ENCODE measurements at regions of chr1 and their contacts with region 1.

Region 1: DNA sequence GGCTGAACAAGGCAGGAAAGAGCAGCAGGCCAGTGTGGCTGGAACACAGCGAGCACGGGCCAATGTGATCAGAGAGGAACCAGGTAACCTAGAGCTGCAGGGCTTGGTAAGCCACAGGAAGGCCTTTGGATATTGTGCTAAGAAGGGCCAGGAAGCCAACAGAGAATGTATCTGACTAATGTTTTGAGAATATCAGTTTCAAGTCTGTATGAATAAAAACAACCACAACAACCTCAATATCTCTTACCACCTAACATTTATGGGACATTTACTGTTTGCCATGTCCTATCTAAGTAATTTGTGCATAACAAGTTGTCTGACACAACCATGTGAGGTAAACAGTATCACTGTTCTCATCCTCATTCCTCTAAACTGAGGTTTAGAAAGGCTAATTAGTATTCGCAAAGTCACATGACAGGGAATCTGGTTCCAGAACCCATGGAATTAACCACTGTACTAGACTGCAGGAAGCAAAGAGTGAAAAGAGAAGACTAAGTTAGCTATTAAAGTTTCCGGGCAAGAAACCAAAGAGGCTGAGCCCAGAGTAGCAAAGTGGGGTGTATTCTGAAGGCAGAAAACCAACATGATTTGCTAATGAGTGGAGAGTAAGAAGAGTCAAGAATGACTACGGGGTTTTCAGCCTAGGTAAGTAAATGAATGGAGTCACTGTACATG is 38.9 kb downstream of the SPRTN start:
- DNase-seq: no peak
- H3K4me3 Mint-ChIP-seq: peak overlapping the region; percentile 28
- H3K27ac Mint-ChIP-seq: peak overlapping the region; percentile 83
- H3K4me1 Mint-ChIP-seq: peaks cover 34% of the 10 kb centered on the region
- H3K27me3 Mint-ChIP-seq: no peaks in the 10 kb centered on the region

Region 2: DNA sequence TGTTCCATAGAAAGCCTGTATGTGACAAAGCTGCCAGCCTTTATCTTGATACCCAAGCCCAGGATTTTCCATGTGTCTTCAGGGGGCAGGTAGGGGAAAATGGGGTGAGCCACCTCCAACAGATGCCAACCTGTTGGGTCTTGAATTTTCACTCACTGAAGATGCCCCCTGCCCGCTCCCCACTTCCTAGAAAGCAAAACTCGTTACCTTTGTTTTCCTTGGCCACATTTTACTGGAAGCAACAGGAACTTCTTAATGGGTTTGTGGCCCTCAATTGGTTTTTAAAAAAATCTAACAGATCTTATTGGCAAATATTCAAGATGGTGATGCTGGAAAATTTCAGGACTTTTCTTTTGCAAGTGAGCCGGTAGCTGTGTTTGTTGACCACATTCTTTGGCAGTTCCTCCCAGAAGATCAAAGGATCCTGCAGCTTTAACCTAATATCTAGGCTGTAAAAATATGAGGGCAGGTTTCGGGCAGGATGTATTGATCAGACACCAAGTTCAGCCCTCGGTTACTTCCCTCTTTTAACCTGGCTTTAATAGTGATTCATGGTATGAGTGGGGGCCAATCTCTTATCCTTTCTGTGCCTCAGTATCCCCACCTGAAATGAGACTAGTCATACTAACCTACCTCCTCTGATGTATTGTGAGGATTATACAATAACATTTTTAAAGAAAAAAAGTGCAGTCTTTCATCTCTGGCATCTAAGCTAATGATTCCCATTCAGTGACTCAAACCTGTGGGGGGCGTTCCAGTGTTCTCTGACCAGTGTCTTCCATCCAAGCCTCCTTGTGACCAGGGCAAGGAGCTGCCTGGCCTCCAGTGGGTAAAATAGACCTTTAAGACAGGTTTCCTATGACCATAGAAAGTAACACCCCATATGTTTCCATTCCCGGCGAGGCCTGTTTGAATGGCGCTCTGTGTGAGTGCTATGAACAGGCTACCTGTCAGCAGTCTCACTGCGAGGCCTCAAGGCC is 157.3 kb before region 1 on chr1:
- intact Hi-C with region 1: no loop called
- DNase-seq: no peak
- H3K4me3 Mint-ChIP-seq: no peak overlapping the region
- H3K27ac Mint-ChIP-seq: no peak overlapping the region
- H3K4me1 Mint-ChIP-seq: peaks cover 6% of the 10 kb centered on the region
- H3K27me3 Mint-ChIP-seq: peaks cover 3% of the 10 kb centered on the region

Region 3: DNA sequence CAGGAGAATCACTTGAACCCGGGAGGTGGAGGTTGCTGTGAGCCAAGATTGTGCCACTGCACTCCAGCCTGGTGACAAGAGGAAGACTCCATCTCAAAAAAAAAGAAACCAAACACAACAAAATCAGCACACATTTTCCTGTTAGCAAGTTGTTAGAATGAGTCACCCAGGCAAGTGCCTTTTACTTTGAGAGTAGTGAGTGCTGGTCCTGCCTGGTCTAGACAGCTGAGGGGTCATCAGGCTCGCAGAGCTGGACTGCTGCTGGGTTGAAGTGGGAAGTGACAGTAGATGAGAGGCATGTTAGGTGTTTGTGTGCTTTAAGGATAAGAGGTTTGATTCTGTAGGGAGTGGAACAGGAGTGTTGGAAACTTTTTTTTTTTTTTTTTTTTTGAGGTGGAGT is 104.1 kb before region 1 on chr1:
- intact Hi-C with region 1: loop called (anchors 1 kb)
- DNase-seq: peak; percentile 16
- H3K4me3 Mint-ChIP-seq: peak overlapping the region; percentile 71
- H3K27ac Mint-ChIP-seq: peak overlapping the region; percentile 99
- H3K4me1 Mint-ChIP-seq: peaks cover 36% of the 10 kb centered on the region
- H3K27me3 Mint-ChIP-seq: no peaks in the 10 kb centered on the region

Region 4: DNA sequence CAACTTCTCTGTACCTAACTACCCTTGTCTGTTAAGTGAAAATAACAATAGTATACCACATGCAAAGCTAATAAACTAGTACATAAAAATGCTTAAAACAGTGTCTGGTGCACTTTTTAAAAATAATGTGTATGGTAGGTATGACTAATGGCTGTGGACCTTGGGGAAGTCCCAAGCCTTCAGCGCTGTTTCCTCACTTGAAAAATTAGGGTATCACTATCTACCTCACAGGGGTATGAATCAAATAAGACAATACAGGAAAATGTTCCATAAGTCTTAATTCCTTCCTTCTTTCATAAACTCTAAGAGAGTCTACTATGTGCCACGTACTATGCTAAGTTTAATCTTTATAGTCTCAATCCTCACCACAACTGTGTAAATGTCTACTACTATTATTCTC is 13.1 kb after region 1 on chr1:
- intact Hi-C with region 1: loop called (anchors 2 kb)
- DNase-seq: no peak
- H3K4me3 Mint-ChIP-seq: no peak overlapping the region
- H3K27ac Mint-ChIP-seq: peak overlapping the region; percentile 24
- H3K4me1 Mint-ChIP-seq: peaks cover 27% of the 10 kb centered on the region
- H3K27me3 Mint-ChIP-seq: no peaks in the 10 kb centered on the region

Region 5: GRCh38 chr1:231407547-231408396 is 30.8 kb after region 1 on chr1:
- intact Hi-C with region 1: no loop called
- DNase-seq: no peak
- H3K4me3 Mint-ChIP-seq: no peak overlapping the region
- H3K27ac Mint-ChIP-seq: no peak overlapping the region
- H3K4me1 Mint-ChIP-seq: peaks cover 10% of the 10 kb centered on the region
- H3K27me3 Mint-ChIP-seq: no peaks in the 10 kb centered on the region

Region 6: DNA sequence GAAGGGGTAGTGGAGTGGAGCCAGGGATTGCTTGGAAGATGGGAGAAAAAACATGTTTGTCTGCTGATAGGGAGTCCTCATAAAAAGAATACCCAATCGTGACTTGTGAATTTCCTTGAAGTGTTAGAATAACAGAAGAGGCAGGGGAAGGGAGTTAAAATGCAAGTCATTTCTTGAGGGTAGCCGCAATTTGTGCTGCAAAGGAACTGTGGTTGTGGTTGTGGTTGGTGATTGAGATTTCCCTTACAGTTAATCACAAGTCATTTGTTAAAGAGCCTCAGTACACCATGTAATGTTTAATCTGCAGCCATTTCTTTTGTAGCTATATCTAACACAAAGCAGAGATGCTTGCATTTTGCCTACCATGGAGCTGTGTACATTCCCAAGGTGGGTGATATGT is 83.6 kb after region 1 on chr1:
- intact Hi-C with region 1: loop called (anchors 2 kb)
- DNase-seq: peak; percentile 71
- H3K4me3 Mint-ChIP-seq: no peak overlapping the region
- H3K27ac Mint-ChIP-seq: no peak overlapping the region
- H3K4me1 Mint-ChIP-seq: peaks cover 35% of the 10 kb centered on the region
- H3K27me3 Mint-ChIP-seq: peaks cover 61% of the 10 kb centered on the region

Region 7: DNA sequence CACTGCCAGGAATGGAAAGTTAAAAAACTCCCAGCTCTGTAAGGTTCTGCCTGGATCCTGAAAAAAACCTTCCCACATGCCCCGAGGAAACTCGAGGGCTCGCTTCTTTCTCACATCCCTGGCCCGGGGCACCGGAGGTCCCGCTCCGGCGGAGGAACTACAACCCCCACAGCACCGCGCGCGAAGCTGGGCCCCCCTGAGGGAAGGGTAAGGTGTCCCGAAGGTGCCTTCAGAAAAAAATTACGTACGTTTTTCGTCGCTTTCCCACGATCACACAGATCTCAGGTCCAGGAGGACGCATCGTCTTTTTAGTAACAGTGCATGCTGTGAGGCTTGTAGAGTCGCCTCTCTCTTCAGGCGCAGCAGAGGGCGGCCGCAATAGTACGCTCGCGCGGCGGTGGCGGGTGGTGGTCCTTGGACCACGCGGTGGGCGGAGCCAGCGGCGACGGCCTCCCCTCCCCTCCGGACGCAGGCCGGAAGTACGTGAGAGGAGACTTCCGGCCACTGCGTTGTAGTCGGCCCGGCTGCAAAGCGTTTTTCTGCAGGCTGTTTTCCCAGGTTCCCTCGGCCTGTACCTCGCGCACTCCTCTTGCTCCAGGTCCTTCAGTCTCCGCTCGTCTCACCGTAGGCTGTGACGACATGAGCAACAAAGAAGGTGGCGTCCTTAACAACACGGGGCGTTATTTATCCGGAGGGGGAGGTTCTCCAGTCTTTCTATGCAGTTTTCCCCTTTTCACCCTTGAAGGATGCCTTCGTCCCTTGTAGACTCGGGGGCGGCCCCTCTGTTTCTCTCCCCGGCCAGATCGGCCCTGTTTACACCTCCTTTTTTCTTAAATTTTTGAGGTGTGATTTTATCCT is 151.4 kb after region 1 on chr1 and contains the start of gene TSNAX:
- intact Hi-C with region 1: loop called (anchors 5 kb)
- DNase-seq: peak; percentile 89
- H3K4me3 Mint-ChIP-seq: peak within 1 kb of the TSS; percentile 97
- H3K27ac Mint-ChIP-seq: peak within 1 kb of the TSS; percentile 99
- H3K4me1 Mint-ChIP-seq: peaks cover 30% of the 10 kb centered on the region
- H3K27me3 Mint-ChIP-seq: no peaks in the 10 kb centered on the region
- total RNA-seq, gene TSNAX: 43.9 and 44.4 TPM in 2 replicates